Left colon (tissue), 2 donors: ENCODE measurements at regions of chr3 and their contacts with region 1.

Region 1: GRCh38 chr3:156151824-156152428 is 31.5 kb downstream of the KCNAB1 start:
- DNase-seq: peak; percentile 56 to 67
- ATAC-seq: peak; percentile 88

Region 2: DNA sequence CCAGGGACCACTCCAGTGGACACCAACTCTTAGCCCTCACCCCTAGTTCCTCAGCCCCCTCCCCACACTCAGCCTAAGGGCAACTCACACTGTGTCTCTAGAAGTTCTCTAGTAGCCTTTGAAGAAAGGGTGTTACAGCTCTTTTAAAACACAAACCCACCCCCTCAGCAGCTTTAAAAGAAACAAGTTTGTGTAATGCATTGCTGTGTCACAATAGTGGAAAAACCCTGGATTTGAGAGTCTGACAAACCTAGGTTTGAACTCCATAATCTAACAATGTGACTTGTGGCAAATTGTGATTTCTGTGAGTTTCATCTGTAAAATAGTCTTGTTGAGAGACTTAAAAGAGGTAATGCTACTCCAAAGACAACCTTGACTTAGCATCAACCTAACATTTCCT is 461.0 kb before region 1 on chr3:
- intact Hi-C with region 1: no loop called
- DNase-seq: no peak
- ATAC-seq: no peak

Region 3: GRCh38 chr3:156382458-156383346 is 230.8 kb after region 1 on chr3:
- intact Hi-C with region 1: loop called in 1 of 2 experiments (anchors 10 kb)
- DNase-seq: peak in 1 of 2 donors; percentile 34
- ATAC-seq: peak; percentile 63

Region 4: DNA sequence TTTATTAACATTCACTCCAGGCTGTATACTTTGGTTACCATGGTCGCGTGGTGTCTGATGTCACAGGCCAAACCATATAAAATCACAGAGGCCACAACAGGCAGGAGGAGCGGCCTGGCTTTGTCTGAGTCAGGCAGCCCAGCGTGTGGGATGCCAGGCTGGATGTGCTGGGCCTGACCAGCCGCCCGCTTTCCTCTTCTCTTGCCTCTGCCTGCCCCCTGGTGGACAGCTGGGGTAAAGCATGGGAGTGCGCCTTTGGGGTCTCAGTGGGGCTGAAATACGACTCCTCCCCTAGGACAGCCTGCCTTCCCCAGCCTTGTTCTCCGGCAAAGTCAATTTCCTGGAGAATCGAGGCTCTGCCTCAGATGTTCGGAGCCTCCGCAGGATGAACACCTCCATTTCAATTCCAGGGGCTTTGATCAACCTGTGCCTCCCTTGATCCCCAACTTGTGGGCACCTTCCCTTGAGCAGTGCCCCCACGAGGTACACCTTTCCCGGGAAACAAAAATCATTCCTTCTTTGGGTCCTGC is 929.8 kb after region 1 on chr3:
- intact Hi-C with region 1: loop called in 1 of 2 experiments (anchors 5 kb)
- DNase-seq: peak; percentile 90 to 92
- ATAC-seq: peak; percentile 98

Region 5: DNA sequence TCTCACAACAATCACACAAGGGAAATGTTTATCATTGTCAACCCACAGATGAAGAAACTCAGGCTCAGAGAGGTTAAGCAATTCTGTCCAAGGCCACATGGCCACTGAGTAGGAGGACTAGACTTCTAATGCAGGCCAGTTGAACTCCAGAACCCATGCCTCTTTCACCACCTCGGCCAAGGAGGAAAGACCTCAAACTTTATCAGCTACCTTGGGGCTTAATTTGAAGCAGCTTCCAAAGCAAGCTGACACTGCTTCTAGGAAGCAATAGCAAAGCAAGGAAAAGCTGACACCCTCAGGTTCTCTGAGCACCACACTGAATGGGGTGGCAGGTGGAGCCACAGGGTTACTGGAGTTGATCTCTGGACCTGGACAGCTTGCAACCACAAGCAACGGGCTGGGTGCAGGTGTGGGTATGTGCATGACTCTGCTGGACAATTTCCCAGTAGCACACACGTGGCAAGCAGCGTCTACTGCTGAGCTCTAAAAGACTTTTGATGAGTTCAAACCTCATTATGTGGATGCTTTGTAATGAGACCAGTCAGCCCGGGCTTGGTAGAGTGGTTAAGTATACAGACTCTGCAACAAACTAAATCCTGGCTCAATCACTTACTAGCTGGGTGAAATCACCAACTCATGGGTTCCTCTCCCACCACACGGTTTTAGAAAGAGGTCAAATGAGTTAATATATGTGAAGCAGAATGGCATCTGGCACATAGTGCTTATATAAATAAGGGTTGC is 984.9 kb after region 1 on chr3:
- intact Hi-C with region 1: loop called in 1 of 2 experiments (anchors 5 kb)
- DNase-seq: peak; percentile 76 to 93
- ATAC-seq: peak; percentile 91